Mammary epithelial cell (primary cell): ENCODE measurements at regions of chr4 and their contacts with region 1.

Region 1: DNA sequence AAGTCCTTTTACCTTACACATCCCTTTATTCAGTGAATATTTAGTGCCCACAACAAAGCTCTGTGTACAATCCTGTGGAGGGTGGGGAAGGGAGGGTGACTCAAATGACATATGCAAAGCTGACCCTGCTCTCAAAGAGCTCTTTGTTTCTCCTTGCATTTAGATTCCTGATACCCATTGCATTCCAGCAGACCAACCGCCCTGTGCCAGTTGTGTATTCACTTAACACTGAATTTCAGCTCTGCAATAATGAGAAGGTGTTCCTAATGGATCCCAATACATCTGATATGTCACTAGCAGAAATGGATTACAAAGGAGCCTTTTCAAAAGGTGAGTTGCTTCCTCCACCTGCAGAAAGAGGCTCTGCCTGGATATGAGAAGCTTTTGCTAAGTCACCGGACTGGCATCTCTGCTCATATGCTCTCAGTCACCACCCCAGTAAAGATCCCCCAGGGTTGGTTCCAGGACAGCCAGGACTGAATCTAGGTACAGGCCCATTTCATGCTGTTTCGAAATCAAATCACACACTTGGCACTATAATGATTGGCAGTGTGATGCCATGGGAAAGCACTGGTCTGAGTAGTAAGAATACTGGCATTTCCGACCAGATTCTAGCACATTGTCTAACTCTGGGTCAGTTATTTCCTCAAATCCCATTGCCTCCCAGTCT is 17.1 kb upstream of the ANXA3 start:
- DNase-seq: peak; percentile 95
- H3K4me3 ChIP-seq: no peak overlapping the region
- H3K27ac ChIP-seq: peak overlapping the region; percentile 97
- H3K4me1 ChIP-seq: peaks cover 48% of the 10 kb centered on the region
- H3K27me3 ChIP-seq: no peaks in the 10 kb centered on the region
- CTCF ChIP-seq: no peak

Region 2: DNA sequence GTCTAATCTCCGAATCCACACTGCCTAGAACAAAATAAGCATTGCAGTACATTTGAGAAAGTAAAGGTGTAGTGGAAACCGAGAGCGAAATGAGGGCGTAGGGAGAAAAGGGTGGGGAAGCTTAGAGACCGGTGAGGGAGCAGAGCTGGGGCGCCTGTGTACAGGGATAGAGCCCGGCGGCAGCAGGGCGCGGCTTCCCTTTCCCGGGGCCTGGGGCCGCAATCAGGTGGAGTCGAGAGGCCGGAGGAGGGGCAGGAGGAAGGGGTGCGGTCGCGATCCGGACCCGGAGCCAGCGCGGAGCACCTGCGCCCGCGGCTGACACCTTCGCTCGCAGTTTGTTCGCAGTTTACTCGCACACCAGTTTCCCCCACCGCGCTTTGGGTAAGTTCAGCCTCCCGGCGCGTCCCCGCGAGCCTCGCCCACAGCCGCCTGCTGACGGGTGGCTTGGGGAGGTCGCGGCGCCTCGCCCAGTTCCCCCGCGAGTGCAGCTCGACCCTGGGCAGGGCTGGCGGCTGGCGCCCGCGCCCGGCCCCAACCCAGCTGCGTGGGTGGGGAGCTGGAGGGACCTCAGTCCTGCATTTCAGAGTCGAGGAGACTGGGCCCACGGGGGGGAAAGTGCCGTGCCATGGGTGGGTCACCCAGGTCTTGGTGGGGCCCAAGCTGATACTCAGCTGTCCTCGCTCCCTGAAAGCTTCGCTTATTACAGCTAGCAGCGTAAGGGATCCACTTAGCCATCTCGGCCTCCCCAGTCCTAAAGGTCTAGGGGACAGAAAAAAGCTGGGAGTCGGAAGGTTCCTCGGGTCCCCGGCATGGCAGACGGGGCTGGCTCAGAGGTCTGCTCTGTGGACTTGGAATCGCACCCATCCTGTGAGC is 17.3 kb after region 1 on chr4 and contains the start of gene ANXA3:
- CTCF ChIA-PET with region 1: no interaction called
- dilution Hi-C with region 1: no loop called
- in situ Hi-C with region 1: no loop called
- intact Hi-C with region 1: loop called (anchors 1 kb)
- DNase-seq: peak; percentile 70
- H3K4me3 ChIP-seq: peak within 1 kb of the TSS; percentile 76 to 97 (median 82)
- H3K27ac ChIP-seq: peak within 1 kb of the TSS; percentile 100
- H3K4me1 ChIP-seq: peaks cover 39% of the 10 kb centered on the region
- H3K27me3 ChIP-seq: no peaks in the 10 kb centered on the region
- CTCF ChIP-seq: peak in 1 of 2 donors; percentile 0
- total RNA-seq, gene ANXA3: 325 to 422 TPM

Region 3: GRCh38 chr4:78569291-78569821 is 34.9 kb after region 1 on chr4:
- CTCF ChIA-PET with region 1: no interaction called
- dilution Hi-C with region 1: loop called (anchors 5 kb)
- in situ Hi-C with region 1: no loop called
- intact Hi-C with region 1: no loop called
- DNase-seq: peak; percentile 71
- H3K4me3 ChIP-seq: no peak overlapping the region
- H3K27ac ChIP-seq: peak overlapping the region; percentile 97
- H3K4me1 ChIP-seq: peaks cover 62% of the 10 kb centered on the region
- H3K27me3 ChIP-seq: no peaks in the 10 kb centered on the region
- CTCF ChIP-seq: no peak

Region 4: DNA sequence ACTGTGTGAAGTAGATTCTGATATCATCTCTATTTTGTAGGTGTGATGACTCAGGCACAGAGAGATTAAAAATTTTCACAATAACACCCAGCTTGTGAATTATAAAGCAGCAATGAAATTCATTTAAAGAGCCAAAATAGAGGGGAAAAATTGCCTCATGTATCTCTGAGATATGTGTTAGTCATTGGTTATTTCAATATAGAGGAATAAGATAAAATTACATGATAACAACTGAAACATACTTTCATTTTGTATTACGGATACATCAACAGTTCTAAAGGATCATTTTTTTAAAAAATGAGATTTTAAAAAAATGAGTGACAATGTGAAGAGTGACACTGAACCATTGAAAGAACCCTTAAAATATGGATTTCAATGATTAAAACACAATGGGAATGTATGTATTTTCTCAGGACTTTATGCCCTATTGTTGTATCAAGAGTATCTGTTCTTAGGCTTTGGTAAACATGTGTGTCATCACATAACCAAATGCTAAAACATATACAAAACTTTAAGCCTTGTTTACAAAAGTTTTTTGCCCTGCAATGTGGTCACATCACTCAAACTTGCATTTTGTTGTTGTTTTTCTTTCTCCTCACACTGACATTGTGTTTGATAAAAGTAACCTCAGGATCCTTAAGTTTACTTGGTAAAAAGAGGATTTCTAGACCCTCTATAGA is 1317.3 kb after region 1 on chr4:
- CTCF ChIA-PET with region 1: no interaction called
- dilution Hi-C with region 1: no loop called
- in situ Hi-C with region 1: no loop called
- intact Hi-C with region 1: no loop called
- DNase-seq: no peak
- H3K4me3 ChIP-seq: no peak overlapping the region
- H3K27ac ChIP-seq: no peak overlapping the region
- H3K4me1 ChIP-seq: no peaks in the 10 kb centered on the region
- H3K27me3 ChIP-seq: no peaks in the 10 kb centered on the region
- CTCF ChIP-seq: no peak